ENCODE measurements at regions of chr9 and their contacts with region 1.

Region 1: GRCh38 chr9:91164724-91165520 is 196.8 kb downstream of the AUH start:
- DNase-seq: peak; percentile 92

Region 2: DNA sequence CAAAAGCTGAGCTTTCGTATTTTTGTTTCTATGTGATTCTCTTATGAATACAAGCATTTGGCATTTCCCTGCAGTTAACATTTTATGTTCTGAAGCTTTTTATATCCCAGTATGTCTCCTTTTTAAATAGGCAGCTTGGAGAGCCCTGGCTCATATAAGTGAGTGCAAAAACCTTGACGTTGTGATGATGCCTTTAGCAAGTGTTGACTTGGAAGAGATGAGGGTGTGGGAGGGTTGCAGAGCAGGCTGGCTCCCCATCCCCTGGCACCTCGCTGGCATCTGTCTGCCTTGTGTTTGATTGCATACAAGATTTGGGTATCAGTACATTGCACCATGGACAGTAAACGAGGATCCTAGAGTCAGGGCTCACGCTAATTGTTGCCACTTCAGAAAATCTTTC is 480.2 kb before region 1 on chr9:
- intact Hi-C with region 1: no loop called
- DNase-seq: no peak

Region 3: DNA sequence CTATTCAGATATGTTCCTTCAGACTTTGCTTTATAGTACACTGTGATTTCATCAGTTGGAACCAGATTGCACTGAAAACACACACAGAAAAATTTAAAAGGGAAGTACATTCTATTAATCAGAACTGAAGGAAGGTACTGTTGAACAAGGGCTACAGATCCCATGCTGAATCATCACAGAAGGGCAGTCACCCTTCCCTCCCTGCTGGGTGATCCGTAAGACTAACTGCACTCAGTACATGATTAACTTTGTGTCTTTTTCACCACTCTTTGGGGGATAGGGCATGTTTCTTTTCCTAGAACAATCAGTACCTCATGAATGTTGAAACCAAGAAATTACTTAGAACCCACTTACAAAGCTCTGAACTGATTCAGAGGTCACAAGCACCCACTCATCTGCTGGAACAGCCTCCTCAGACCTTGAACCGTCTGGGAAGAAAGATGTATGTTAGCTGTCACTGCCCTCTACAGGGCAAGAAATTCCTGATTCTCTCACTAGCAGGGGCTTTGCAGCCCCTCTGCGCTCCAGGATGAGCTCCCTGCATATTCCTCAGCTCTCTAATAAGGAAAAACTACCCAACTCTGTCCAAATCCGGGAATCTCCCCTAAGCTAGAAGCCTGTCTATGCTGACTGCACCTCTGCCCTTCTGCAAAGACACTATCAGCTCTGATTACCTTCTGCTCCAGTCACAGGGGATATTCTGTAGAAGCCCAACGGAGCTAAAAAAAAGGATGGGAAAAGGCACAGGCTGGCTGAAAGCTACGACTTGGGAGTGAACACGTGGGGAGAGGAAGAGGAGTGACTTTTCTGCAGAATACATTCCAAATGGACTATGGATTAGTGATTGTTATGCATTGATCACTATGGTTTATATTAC is 1077.6 kb after region 1 on chr9:
- intact Hi-C with region 1: loop called in 1 of 2 experiments (anchors 5 kb)
- DNase-seq: no peak

Measured in posterior vena cava (tissue), 2 donors.